ENCODE measurements at regions of chr20 and their contacts with region 1.

Region 1: GRCh38 chr20:58650776-58651558 is at the start of gene STX16:
- DNase-seq: peak; percentile 99
- ATAC-seq: peak; percentile 76
- H3K4me3 ChIP-seq: peak within 1 kb of the TSS; percentile 96
- H3K27ac ChIP-seq: peak within 1 kb of the TSS; percentile 85
- H3K4me1 ChIP-seq: peaks cover 65% of the 10 kb centered on the region
- H3K27me3 ChIP-seq: no peaks in the 10 kb centered on the region
- CTCF ChIP-seq: peak; percentile 89
- total RNA-seq, gene STX16: 44.2 and 47.1 TPM in 2 replicates

Region 2: GRCh38 chr20:58407966-58408557 is 242.9 kb before region 1 on chr20:
- CTCF ChIA-PET with region 1: no interaction called
- POLR2A ChIA-PET with region 1: no interaction called
- intact Hi-C with region 1: loop called (anchors 5 kb)
- DNase-seq: no peak
- ATAC-seq: no peak
- H3K4me3 ChIP-seq: no peak overlapping the region
- H3K27ac ChIP-seq: peak overlapping the region; percentile 4
- H3K4me1 ChIP-seq: peaks cover 35% of the 10 kb centered on the region
- H3K27me3 ChIP-seq: no peaks in the 10 kb centered on the region
- CTCF ChIP-seq: no peak

Region 3: GRCh38 chr20:58515233-58516184 is 135.5 kb before region 1 on chr20 and contains the start of gene APCDD1L:
- CTCF ChIA-PET with region 1: no interaction called
- POLR2A ChIA-PET with region 1: interaction called, 6 read pairs
- intact Hi-C with region 1: loop called (anchors 10 kb)
- DNase-seq: peak; percentile 89
- ATAC-seq: peak; percentile 93
- H3K4me3 ChIP-seq: peak within 1 kb of the TSS; percentile 67
- H3K27ac ChIP-seq: no peak within 1 kb of the TSS
- H3K4me1 ChIP-seq: peaks cover 22% of the 10 kb centered on the region
- H3K27me3 ChIP-seq: no peaks in the 10 kb centered on the region
- CTCF ChIP-seq: no peak
- total RNA-seq, gene APCDD1L: 2.0 and 4.9 TPM in 2 replicates

Region 4: DNA sequence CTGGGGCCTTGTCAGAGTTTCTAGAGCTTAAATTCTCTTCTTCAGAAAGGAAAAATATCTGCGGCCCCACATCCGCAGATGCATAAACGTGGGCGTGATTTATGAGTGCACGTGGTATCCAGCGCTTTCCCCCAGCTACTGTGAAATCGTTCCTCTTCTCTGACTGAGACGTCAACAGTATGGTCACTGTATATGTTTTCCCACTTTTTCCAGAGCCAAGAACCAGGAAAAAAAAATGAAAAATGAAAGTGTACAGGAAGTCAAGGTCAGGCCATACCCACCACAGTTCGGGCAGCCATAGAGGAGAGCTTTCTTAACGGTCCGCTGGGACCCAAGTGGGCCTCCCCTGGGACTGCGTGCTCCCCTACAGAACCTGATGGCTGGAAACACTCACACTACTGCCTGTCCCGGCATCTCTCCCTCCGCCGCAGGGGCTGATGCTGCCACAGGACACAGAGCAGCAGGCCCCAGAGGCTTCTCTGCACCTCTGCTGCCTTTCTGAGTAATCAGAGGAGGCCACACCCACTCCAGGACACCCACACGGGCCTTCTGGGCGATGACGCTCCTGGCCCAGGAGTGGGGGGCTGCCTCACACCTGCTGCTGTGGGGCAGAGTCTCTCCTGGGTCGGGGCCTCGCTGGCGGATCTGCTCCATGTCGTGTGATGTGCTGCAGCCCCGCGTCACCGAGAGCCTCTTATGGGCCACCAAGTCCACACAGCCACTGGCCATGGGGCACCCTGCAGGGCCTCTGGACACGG is 16.3 kb before region 1 on chr20:
- CTCF ChIA-PET with region 1: no interaction called
- POLR2A ChIA-PET with region 1: no interaction called
- intact Hi-C with region 1: no loop called
- DNase-seq: no peak
- ATAC-seq: no peak
- H3K4me3 ChIP-seq: no peak overlapping the region
- H3K27ac ChIP-seq: no peak overlapping the region
- H3K4me1 ChIP-seq: peaks cover 14% of the 10 kb centered on the region
- H3K27me3 ChIP-seq: no peaks in the 10 kb centered on the region
- CTCF ChIP-seq: no peak

Region 5: DNA sequence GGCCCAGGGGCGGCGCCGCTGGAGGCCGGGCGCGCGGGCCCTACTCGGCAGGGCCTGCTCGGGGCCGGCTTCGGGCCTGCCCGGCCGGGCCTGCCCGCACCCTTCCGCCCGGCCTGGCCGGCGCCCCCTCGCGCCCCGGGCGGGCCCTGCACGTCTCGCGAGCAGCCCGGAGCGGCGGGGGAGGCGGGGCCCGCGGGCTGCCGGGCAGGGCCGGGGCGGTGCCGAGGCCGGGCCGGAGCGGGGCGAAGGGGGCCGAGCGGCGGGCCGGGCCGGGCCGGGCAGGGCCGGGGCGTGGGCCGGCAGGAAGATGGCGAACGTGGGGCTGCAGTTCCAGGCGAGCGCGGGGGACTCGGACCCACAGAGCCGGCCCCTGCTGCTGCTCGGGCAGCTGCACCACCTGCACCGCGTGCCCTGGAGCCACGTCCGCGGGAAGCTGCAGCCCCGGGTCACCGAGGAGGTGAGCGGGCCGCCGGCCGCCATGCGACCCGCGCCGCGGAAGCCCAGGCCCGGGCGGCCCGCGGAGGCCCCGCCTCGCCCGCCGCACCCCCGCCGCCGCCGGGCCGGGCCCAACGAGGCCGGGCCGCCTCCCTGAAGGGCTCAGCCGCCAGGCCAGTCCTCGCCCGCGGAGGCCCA is 41.7 kb after region 1 on chr20 and contains the start of gene NPEPL1:
- CTCF ChIA-PET with region 1: interaction called, 14 read pairs
- POLR2A ChIA-PET with region 1: interaction called, 10 read pairs
- intact Hi-C with region 1: loop called (anchors 2 kb)
- DNase-seq: peak; percentile 88
- ATAC-seq: peak; percentile 91
- H3K4me3 ChIP-seq: peak within 1 kb of the TSS; percentile 74
- H3K27ac ChIP-seq: peak within 1 kb of the TSS; percentile 33
- H3K4me1 ChIP-seq: peaks cover 17% of the 10 kb centered on the region
- H3K27me3 ChIP-seq: no peaks in the 10 kb centered on the region
- CTCF ChIP-seq: no peak
- total RNA-seq, gene NPEPL1: 49.7 and 53.1 TPM in 2 replicates

Region 6: GRCh38 chr20:58888521-58889333 is 237.8 kb after region 1 on chr20:
- CTCF ChIA-PET with region 1: no interaction called
- POLR2A ChIA-PET with region 1: no interaction called
- intact Hi-C with region 1: loop called (anchors 5 kb)
- DNase-seq: peak; percentile 83
- ATAC-seq: peak; percentile 65
- H3K4me3 ChIP-seq: peak overlapping the region; percentile 81
- H3K27ac ChIP-seq: no peak overlapping the region
- H3K4me1 ChIP-seq: peaks cover 24% of the 10 kb centered on the region
- H3K27me3 ChIP-seq: no peaks in the 10 kb centered on the region
- CTCF ChIP-seq: no peak